ENCODE measurements at regions of chr16 and their contacts with region 1.

Region 1: GRCh38 chr16:3938848-3939624 is 58.5 kb upstream of the CREBBP start:
- DNase-seq: peak; percentile 86 to 94
- H3K4me3 ChIP-seq: peak overlapping the region in 3 of 4 experiments; percentile 9 to 50 (median 19); a peak in 4 of 8 replicates
- H3K27ac ChIP-seq: no peak overlapping the region
- H3K4me1 ChIP-seq: peaks cover 0 to 4% (median 2%) of the 10 kb centered on the region in 4 experiments; a peak in 3 of 7 replicates
- H3K27me3 ChIP-seq: peaks cover 0 to 2% (median 1%) of the 10 kb centered on the region in 4 experiments; a peak in 1 of 7 replicates
- CTCF ChIP-seq: peak; percentile 77 to 96 (median 93)
- EP300 ChIP-seq: no peak
- POLR2A ChIP-seq: peak in 1 of 2 experiments; percentile 55; a peak in 1 of 3 replicates
- RAD21 ChIP-seq: peak; percentile 63 to 82

Region 2: DNA sequence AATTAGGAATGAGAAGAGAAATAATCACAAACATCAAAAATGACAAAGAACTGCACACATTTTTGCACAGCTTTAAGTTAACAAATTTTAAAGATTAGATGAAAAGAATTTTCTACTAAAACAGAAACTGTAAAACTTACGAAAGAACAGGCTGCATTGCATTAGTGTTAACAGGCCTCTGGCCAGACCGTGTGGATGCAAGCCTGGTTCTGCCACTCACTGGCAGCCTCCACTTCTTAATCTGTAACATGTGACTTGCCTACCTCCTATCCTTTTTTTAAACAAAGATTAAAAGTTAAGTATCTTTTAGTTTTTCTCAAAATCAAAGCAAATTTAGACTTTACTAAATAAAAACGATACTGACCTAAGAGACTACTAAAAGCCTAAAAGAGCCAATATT is 96.0 kb before region 1 on chr16:
- CTCF ChIA-PET with region 1: no interaction called
- POLR2A ChIA-PET with region 1: no interaction called
- DNase-seq: no peak
- H3K4me3 ChIP-seq: no peak overlapping the region
- H3K27ac ChIP-seq: no peak overlapping the region
- H3K4me1 ChIP-seq: peaks cover 2 to 6% (median 5%) of the 10 kb centered on the region in 4 experiments; a peak in 4 of 7 replicates
- H3K27me3 ChIP-seq: no peaks in the 10 kb centered on the region
- CTCF ChIP-seq: no peak
- EP300 ChIP-seq: no peak
- POLR2A ChIP-seq: no peak
- RAD21 ChIP-seq: no peak

Region 3: DNA sequence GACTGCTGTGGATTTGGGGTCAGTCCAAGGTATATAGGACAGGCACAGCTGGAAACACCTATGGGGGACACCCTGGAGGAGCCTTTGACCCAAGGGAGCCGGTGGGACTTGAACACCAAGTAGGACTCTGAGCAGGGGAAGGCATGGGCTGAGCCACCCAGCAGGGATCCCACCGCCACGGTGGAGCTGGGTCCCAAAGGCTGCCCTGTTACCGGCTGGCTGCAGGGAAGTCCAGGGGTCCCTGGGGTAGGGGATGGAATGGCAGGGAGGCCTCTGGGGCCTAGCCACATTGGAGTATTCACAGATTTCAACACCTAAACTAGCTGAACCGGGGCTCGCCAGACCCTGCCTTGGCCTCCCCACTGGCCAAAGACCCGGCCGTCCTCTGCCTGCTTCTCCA is 18.8 kb before region 1 on chr16:
- CTCF ChIA-PET with region 1: interaction called, 11 read pairs
- POLR2A ChIA-PET with region 1: interaction called, 4 read pairs
- DNase-seq: no peak
- H3K4me3 ChIP-seq: no peak overlapping the region
- H3K27ac ChIP-seq: no peak overlapping the region
- H3K4me1 ChIP-seq: no peaks in the 10 kb centered on the region
- H3K27me3 ChIP-seq: no peaks in the 10 kb centered on the region
- CTCF ChIP-seq: no peak
- EP300 ChIP-seq: no peak
- POLR2A ChIP-seq: no peak
- RAD21 ChIP-seq: no peak

Region 4: DNA sequence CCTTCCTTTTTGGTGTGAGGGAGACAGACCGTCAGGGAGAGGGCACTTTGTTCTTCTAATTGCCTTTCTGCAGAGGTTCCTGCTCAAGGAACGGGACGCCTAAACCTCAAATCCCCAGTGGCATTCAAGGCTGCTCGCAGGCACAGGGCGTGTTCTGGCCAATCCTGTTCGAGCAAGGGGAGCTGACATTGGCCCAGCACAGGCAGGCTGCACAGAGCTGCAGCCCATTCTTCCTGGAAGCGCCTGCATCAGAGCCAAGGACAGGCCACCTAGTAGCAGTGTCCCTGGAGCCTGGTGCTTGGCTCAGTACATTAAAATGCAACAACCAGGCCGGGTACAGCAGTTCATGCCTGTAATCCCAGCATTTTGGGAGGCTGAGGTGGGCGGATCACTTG is 13.7 kb after region 1 on chr16:
- CTCF ChIA-PET with region 1: interaction called, 14 read pairs
- POLR2A ChIA-PET with region 1: interaction called, 3 read pairs
- DNase-seq: no peak
- H3K4me3 ChIP-seq: no peak overlapping the region
- H3K27ac ChIP-seq: no peak overlapping the region
- H3K4me1 ChIP-seq: no peaks in the 10 kb centered on the region
- H3K27me3 ChIP-seq: no peaks in the 10 kb centered on the region
- CTCF ChIP-seq: no peak
- EP300 ChIP-seq: no peak
- POLR2A ChIP-seq: no peak
- RAD21 ChIP-seq: no peak

Region 5: GRCh38 chr16:3986235-3986544 is 47.2 kb after region 1 on chr16:
- CTCF ChIA-PET with region 1: no interaction called
- POLR2A ChIA-PET with region 1: no interaction called
- DNase-seq: no peak
- H3K4me3 ChIP-seq: no peak overlapping the region
- H3K27ac ChIP-seq: no peak overlapping the region
- H3K4me1 ChIP-seq: peaks cover 0 to 4% (median 2%) of the 10 kb centered on the region in 4 experiments; a peak in 3 of 7 replicates
- H3K27me3 ChIP-seq: no peaks in the 10 kb centered on the region
- CTCF ChIP-seq: no peak
- EP300 ChIP-seq: no peak
- POLR2A ChIP-seq: no peak
- RAD21 ChIP-seq: no peak

Region 6: GRCh38 chr16:4160658-4161430 is 221.8 kb after region 1 on chr16:
- CTCF ChIA-PET with region 1: no interaction called
- POLR2A ChIA-PET with region 1: no interaction called
- DNase-seq: no peak
- H3K4me3 ChIP-seq: no peak overlapping the region
- H3K27ac ChIP-seq: no peak overlapping the region
- H3K4me1 ChIP-seq: no peaks in the 10 kb centered on the region
- H3K27me3 ChIP-seq: no peaks in the 10 kb centered on the region
- CTCF ChIP-seq: peak in 2 of 3 experiments; percentile 19 to 24; a peak in 2 of 4 replicates
- EP300 ChIP-seq: no peak
- POLR2A ChIP-seq: no peak
- RAD21 ChIP-seq: peak; percentile 28 to 49; a peak in 3 of 4 replicates

Measured in H1 (cell line).